Activated B cell treated with CpG ODN at 0.5 μM for 24 hours (primary cell): ENCODE measurements at regions of chr7 and their contacts with region 1.

Region 1: GRCh38 chr7:152054367-152055230 is 29.1 kb downstream of the GALNT11 start:
- DNase-seq: no peak
- ATAC-seq: no peak
- H3K4me3 Mint-ChIP-seq: no peak overlapping the region
- H3K27ac Mint-ChIP-seq: no peak overlapping the region
- H3K4me1 Mint-ChIP-seq: no peaks in the 10 kb centered on the region
- H3K27me3 Mint-ChIP-seq: no peaks in the 10 kb centered on the region
- CTCF ChIP-seq: no peak

Region 2: DNA sequence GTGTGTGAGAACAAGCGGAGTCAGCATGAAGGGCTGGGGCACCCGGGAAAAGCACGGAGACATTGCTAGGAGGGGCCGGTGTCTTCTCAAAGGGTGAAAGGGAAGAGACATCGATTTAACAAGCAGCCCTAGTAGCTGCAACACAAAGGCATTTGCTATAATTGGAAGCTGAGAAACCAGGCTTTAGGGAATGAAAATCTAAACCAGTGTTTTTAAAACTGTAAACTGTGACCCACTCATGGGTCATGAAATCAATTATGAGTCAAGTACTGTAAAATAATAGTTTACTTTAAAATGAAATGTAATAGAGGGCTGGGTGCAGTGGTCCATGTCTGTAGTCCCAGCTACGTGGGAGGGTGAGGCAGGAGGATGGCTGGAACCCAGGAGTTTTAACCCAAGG is 406.2 kb before region 1 on chr7:
- CTCF ChIA-PET with region 1: no interaction called
- POLR2A ChIA-PET with region 1: no interaction called
- intact Hi-C with region 1: no loop called
- DNase-seq: no peak
- ATAC-seq: no peak
- H3K4me3 Mint-ChIP-seq: no peak overlapping the region
- H3K27ac Mint-ChIP-seq: no peak overlapping the region
- H3K4me1 Mint-ChIP-seq: no peaks in the 10 kb centered on the region
- H3K27me3 Mint-ChIP-seq: no peaks in the 10 kb centered on the region
- CTCF ChIP-seq: no peak

Region 3: DNA sequence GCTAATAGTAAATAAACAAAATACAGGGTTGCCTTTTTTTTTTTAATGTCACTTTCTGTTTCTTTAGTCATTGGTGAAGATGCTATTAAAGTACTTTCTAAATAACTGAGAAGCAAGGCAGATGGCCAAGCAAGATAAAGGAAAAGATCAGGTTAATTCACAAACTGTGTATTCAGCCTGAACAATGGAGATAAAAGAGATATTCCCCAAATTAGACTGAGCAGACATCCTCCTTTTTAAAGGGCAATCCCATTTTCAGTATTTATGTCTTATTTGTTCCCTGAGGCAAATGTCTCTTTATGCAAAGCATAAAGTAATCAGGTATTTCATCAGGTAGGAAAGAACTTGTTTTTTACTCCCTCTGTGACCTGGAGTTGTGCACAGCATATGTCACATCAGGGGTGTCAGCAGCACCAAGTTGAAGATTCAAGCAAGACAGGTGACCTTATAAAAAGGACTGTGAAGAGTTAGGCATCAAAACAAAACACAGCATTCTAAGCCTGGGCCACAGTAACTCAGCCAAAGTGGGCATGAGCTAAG is 644.6 kb after region 1 on chr7:
- CTCF ChIA-PET with region 1: no interaction called
- POLR2A ChIA-PET with region 1: interaction called, 10 read pairs
- intact Hi-C with region 1: no loop called
- DNase-seq: no peak
- ATAC-seq: no peak
- H3K4me3 Mint-ChIP-seq: no peak overlapping the region
- H3K27ac Mint-ChIP-seq: no peak overlapping the region
- H3K4me1 Mint-ChIP-seq: no peaks in the 10 kb centered on the region
- H3K27me3 Mint-ChIP-seq: peaks cover 2% of the 10 kb centered on the region
- CTCF ChIP-seq: no peak